ENCODE measurements at regions of chr7 and their contacts with region 1.

Region 1: DNA sequence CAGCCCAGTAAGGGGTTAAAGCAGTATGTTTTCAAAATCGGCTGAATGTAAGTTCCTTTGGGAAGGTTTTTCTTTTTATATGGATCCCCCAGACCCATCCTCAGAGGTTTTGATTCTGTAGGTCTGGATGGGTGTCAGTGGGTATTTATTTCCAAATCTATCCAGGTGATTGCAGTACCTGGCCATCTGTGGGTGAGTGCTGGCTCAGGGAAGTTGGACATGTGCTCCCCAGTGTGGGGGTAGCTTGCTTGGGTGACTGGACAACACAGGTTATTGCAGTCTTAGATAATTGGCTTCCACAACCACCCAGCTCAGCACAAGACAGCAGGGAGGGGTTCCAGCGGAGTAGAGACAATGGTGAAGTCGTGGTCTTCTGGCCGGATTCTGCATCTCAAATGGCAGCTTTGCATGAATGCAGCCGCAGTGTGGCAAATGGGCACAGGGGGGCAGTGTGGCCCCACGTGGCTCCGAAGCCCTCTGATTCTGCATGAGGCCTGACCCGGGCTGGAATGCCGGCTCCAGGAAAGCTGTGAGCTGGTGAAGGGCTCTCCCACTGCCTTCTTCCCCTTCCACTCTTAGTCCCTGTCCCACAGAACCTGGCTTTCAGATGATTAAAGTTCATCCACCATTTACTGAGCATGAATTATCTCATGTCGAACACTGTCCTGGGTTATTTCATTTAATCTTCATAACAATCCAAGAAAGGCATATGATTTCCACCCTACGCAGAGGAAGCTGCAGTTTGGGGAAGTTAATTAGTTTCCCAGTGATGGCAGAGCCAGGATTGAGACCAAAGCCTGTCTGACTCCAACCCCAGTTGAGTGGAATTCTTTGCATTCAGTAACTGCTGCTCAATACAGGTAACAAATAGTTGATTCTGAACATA is 64.5 kb upstream of the SYPL1 start:
- DNase-seq: peak; percentile 82
- ATAC-seq: peak; percentile 95
- H3K4me3 Mint-ChIP-seq: no peak overlapping the region
- H3K27ac Mint-ChIP-seq: no peak overlapping the region
- H3K4me1 Mint-ChIP-seq: peaks cover 7% of the 10 kb centered on the region
- H3K27me3 Mint-ChIP-seq: peaks cover 13% of the 10 kb centered on the region
- CTCF ChIP-seq: peak; percentile 94

Region 2: DNA sequence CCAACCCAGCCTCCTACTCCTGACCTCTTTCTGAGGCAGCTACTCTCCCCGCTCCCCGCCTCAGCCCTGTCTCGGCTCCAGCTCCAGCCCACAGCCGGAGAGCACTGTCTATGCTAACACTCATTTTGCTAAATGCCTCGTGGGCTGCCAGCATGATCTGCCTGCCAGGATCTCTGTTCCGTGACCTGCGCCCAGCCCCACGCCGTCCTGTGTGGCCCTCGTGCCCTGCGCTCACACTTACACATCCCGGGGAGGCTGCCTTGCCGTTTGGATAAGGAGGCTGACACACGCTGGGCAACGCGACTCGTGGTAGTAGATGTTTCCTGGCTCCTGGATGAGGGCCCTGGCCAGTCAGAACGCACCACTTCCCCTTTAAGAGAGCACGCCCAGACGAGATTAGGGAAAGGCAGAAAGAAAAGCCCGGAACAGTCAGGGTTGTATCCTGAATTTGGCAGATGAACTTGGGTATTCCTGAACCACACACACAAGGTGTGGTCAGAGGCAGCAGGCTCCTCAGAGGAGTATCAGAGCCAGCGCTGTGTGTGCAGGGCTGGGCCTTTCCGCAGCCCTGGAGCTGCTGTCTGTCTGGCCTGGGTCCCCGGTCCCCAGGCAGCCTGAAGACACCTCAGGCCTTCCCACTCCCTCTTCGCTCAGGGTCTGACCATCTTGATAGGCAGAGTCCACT is 497.7 kb before region 1 on chr7:
- CTCF ChIA-PET with region 1: no interaction called
- POLR2A ChIA-PET with region 1: no interaction called
- intact Hi-C with region 1: no loop called
- DNase-seq: peak; percentile 18
- ATAC-seq: no peak
- H3K4me3 Mint-ChIP-seq: peak overlapping the region; percentile 71
- H3K27ac Mint-ChIP-seq: peak overlapping the region; percentile 89
- H3K4me1 Mint-ChIP-seq: peaks cover 57% of the 10 kb centered on the region
- H3K27me3 Mint-ChIP-seq: no peaks in the 10 kb centered on the region
- CTCF ChIP-seq: no peak

Region 3: GRCh38 chr7:106089647-106090046 is 87.0 kb before region 1 on chr7:
- CTCF ChIA-PET with region 1: no interaction called
- POLR2A ChIA-PET with region 1: no interaction called
- intact Hi-C with region 1: no loop called
- DNase-seq: no peak
- ATAC-seq: no peak
- H3K4me3 Mint-ChIP-seq: no peak overlapping the region
- H3K27ac Mint-ChIP-seq: no peak overlapping the region
- H3K4me1 Mint-ChIP-seq: peaks cover 13% of the 10 kb centered on the region
- H3K27me3 Mint-ChIP-seq: no peaks in the 10 kb centered on the region
- CTCF ChIP-seq: no peak

Region 4: DNA sequence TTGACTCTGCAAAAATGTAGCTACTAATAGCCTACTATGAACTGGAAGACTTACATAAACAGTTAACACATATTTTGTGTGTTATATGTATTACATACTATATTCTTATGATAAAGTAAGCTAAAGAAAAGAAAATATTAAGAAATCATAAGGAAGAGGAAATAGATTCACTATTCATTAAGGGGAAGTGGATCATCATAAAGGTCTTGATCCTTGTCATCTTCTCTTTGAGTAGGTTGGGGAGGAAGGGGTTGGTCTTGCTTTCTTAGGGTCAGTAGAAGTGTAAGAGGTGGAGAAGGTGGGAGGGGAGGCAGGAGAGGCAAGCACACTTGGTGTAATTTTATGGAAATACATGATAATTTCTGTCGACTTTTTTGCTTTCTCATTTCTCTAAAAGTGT is 26.8 kb after region 1 on chr7:
- CTCF ChIA-PET with region 1: interaction called, 12 read pairs
- POLR2A ChIA-PET with region 1: no interaction called
- intact Hi-C with region 1: no loop called
- DNase-seq: no peak
- ATAC-seq: no peak
- H3K4me3 Mint-ChIP-seq: no peak overlapping the region
- H3K27ac Mint-ChIP-seq: no peak overlapping the region
- H3K4me1 Mint-ChIP-seq: peaks cover 4% of the 10 kb centered on the region
- H3K27me3 Mint-ChIP-seq: peaks cover 21% of the 10 kb centered on the region
- CTCF ChIP-seq: no peak

Region 5: DNA sequence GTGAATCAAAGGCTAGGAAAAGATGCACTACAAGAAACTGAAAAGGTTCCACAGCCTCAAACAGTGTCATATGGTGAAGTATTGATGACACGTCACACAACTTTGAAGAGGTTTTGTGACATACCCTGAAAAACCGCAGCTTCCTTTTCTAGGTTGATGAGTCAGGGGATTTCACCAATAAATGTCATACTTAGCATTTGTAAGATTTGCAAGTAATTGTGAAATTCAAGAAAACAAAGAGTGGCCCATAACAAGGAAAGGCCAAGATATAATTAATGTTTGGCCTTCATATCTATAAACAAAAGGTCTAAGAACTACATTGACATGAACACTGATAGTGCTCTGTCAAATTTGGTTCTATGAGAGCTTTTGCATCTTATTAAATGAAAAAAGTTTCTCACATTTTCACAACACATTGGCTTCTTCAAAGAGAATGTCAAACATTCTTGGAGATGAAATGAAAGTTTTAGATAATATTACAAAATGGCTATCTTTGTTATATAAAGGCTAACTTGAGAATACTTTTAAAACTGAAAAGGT is 170.1 kb after region 1 on chr7:
- CTCF ChIA-PET with region 1: interaction called, 4 read pairs
- POLR2A ChIA-PET with region 1: interaction called, 3 read pairs
- intact Hi-C with region 1: loop called (anchors 5 kb)
- DNase-seq: peak; percentile 75
- ATAC-seq: peak; percentile 67
- H3K4me3 Mint-ChIP-seq: peak overlapping the region; percentile 67
- H3K27ac Mint-ChIP-seq: peak overlapping the region; percentile 100
- H3K4me1 Mint-ChIP-seq: peaks cover 52% of the 10 kb centered on the region
- H3K27me3 Mint-ChIP-seq: peaks cover 6% of the 10 kb centered on the region
- CTCF ChIP-seq: no peak

Region 6: DNA sequence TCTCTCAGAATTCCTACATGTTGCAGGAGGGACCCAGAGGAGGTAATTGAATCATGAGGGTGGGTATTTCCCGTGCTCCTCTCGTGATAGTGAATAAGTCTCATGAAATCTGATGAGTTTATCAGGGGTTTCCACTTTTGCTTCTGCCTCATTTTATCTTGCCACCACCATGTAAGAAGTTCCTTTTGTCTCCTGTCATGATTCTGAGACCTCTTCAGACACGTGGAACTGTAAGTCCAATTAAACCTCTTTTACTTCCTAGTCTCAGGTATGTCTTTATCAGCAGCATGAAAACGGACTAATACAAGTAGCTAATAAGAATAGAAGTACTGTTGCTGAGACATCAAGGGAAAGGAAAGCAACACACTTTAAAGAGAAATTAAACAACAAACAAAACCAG is 340.9 kb after region 1 on chr7:
- CTCF ChIA-PET with region 1: interaction called, 10 read pairs
- POLR2A ChIA-PET with region 1: no interaction called
- intact Hi-C with region 1: no loop called
- DNase-seq: no peak
- ATAC-seq: no peak
- H3K4me3 Mint-ChIP-seq: no peak overlapping the region
- H3K27ac Mint-ChIP-seq: no peak overlapping the region
- H3K4me1 Mint-ChIP-seq: peaks cover 4% of the 10 kb centered on the region
- H3K27me3 Mint-ChIP-seq: peaks cover 35% of the 10 kb centered on the region
- CTCF ChIP-seq: no peak

Region 7: DNA sequence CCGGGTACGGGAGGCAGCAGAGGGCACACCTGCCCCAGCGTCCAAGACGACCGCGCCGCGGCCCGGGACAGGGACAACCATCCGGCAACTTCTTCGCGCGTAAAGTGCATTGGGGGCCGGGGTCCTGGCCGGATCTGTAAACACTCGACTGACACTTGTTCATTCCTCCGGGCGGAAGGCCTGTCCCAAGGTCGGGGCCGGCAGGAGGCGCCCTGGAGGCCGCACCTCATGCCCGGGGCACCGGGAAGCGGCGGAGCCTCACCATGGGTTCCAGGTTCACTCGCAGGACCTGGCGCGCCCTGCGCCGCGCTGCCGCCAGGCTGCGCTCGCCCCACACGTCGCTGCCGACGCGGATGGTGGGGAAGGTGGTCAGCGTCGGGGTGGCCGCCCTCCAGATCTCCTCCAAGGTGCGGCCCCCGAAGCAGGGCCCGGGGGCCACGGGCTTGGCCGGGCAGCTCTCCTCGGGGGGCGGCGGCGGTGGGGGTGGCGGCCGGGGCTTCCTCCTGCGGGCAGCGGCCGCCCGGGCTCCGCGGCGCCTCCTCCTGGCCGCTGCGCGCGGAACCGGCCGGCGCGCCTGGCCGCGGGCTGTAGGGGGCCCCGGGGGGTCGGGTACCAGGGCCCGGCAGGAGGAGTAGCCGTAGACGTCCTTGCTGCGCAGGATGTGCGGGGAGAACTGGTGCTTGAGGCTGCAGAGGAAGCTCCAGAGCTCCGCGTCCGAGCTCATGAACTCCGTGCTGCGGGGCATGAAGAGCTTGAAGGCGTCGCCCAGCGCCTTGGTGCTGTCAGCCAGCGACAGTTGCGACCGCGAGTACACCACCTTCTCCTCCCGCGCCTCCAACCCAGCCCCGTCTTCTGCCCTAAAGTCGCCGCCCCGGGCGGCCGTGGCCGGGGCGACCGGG is 483.6 kb after region 1 on chr7:
- CTCF ChIA-PET with region 1: interaction called, 23 read pairs
- POLR2A ChIA-PET with region 1: no interaction called
- intact Hi-C with region 1: loop called (anchors 10 kb)
- DNase-seq: peak; percentile 92
- ATAC-seq: peak; percentile 66
- H3K4me3 Mint-ChIP-seq: peak overlapping the region; percentile 87
- H3K27ac Mint-ChIP-seq: peak overlapping the region; percentile 93
- H3K4me1 Mint-ChIP-seq: peaks cover 31% of the 10 kb centered on the region
- H3K27me3 Mint-ChIP-seq: no peaks in the 10 kb centered on the region
- CTCF ChIP-seq: peak; percentile 88